Transverse colon (tissue), 4 donors: ENCODE measurements at regions of chr3 and their contacts with region 1.

Region 1: DNA sequence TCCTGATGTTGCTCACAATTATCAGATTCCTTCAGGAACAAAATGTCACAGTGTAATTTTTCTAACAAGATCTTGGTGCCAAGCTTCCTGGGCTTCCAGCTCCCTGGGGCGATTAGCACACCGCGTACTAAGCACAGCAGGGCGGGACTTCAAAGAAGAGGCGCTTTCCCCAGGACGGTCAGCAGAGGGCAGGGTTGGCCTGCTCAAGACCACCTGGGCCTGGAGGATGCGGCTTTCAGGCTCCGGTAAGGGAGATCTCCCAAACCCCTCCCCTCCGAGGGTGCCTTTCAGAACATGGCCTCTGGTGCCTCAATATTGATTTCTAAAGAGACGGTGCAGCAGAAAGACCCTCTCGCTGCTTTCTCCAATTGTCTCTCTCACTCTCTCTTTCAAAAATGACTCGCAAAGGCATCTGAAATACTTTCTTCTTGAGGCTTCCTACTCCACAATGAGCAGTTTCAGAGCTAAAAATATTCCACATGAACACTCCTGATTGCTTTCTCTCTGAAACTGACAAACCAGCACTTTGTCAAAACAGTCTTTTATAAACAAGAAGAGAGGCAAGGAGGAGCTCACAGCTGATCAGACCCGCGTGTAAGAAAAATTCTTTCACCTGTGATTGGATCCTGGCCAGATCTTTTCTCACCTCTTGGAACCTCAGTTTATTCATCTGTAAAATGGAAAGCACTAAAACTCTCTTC is 154.0 kb downstream of the ADAMTS9 start:
- DNase-seq: peak; percentile 84
- H3K4me3 ChIP-seq: no peak overlapping the region
- H3K27ac ChIP-seq: peak overlapping the region in 3 of 4 donors; percentile 16 to 53 (median 39)
- H3K4me1 ChIP-seq: peaks cover 0 to 4% (median 2%) of the 10 kb centered on the region in 4 donors
- H3K27me3 ChIP-seq: no peaks in the 10 kb centered on the region
- CTCF ChIP-seq: peak; percentile 68 to 88 (median 76)
- EP300 ChIP-seq: no peak
- POLR2A ChIP-seq: no peak

Region 2: GRCh38 chr3:64267721-64268604 is 265.8 kb before region 1 on chr3:
- in situ Hi-C with region 1: no loop called
- intact Hi-C with region 1: no loop called
- DNase-seq: peak; percentile 55
- H3K4me3 ChIP-seq: peak overlapping the region; percentile 30 to 60 (median 52)
- H3K27ac ChIP-seq: peak overlapping the region; percentile 87 to 94 (median 92)
- H3K4me1 ChIP-seq: peaks cover 0 to 17% (median 8%) of the 10 kb centered on the region in 4 donors
- H3K27me3 ChIP-seq: peaks cover 18% of the 10 kb centered on the region
- CTCF ChIP-seq: no peak
- EP300 ChIP-seq: no peak
- POLR2A ChIP-seq: peak; percentile 67

Region 3: GRCh38 chr3:64518950-64519349 is 14.8 kb before region 1 on chr3:
- in situ Hi-C with region 1: no loop called
- intact Hi-C with region 1: no loop called
- DNase-seq: no peak
- H3K4me3 ChIP-seq: no peak overlapping the region
- H3K27ac ChIP-seq: no peak overlapping the region
- H3K4me1 ChIP-seq: no peaks in the 10 kb centered on the region
- H3K27me3 ChIP-seq: no peaks in the 10 kb centered on the region
- CTCF ChIP-seq: no peak
- EP300 ChIP-seq: no peak
- POLR2A ChIP-seq: no peak

Region 4: GRCh38 chr3:64685800-64686445 is 152.2 kb after region 1 on chr3:
- in situ Hi-C with region 1: no loop called
- intact Hi-C with region 1: loop called (anchors 10 kb)
- DNase-seq: peak; percentile 89
- H3K4me3 ChIP-seq: peak overlapping the region; percentile 51 to 66 (median 59)
- H3K27ac ChIP-seq: peak overlapping the region; percentile 90 to 96 (median 92)
- H3K4me1 ChIP-seq: peaks cover 0 to 18% (median 9%) of the 10 kb centered on the region in 4 donors
- H3K27me3 ChIP-seq: peaks cover 23% of the 10 kb centered on the region
- CTCF ChIP-seq: peak in 4 of 5 experiments; percentile 7 to 32 (median 13)
- EP300 ChIP-seq: peak; percentile 64
- POLR2A ChIP-seq: peak; percentile 78

Region 5: GRCh38 chr3:65170390-65171042 is 636.7 kb after region 1 on chr3:
- in situ Hi-C with region 1: loop called in 1 of 4 experiments (anchors 25 kb)
- intact Hi-C with region 1: no loop called
- DNase-seq: peak; percentile 76
- H3K4me3 ChIP-seq: no peak overlapping the region
- H3K27ac ChIP-seq: peak overlapping the region; percentile 20 to 65 (median 59)
- H3K4me1 ChIP-seq: peaks cover 0 to 10% (median 4%) of the 10 kb centered on the region in 4 donors
- H3K27me3 ChIP-seq: no peaks in the 10 kb centered on the region
- CTCF ChIP-seq: peak in 2 of 5 experiments; percentile 14 to 32
- EP300 ChIP-seq: peak; percentile 100
- POLR2A ChIP-seq: no peak

Region 6: GRCh38 chr3:65245133-65246063 is 711.6 kb after region 1 on chr3:
- in situ Hi-C with region 1: loop called in 3 of 4 experiments (anchors 25 kb)
- intact Hi-C with region 1: loop called (anchors 5 kb)
- DNase-seq: no peak
- H3K4me3 ChIP-seq: no peak overlapping the region
- H3K27ac ChIP-seq: no peak overlapping the region
- H3K4me1 ChIP-seq: peaks cover 0 to 4% (median 0%) of the 10 kb centered on the region in 4 donors
- H3K27me3 ChIP-seq: no peaks in the 10 kb centered on the region
- CTCF ChIP-seq: peak; percentile 26 to 47 (median 35)
- EP300 ChIP-seq: no peak
- POLR2A ChIP-seq: no peak

Region 7: DNA sequence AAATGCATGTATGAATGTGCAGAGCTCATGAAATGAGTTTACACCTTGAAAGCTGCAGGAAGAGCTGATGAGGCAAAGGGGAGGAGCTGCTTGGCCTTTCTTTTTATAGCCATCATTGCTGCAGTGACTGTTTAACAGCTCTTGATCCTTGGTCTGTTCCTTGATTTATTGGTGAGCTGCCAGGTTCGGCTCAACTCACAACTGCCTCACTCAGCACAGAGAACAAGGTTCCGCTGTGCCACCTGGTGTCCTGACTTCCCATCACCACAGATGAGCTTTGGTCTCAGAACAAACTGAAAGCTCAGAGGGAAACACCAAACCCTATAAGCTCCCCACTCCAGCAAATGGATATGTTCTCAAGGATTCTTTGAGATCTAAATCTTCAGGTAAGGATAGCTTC is 878.8 kb after region 1 on chr3:
- in situ Hi-C with region 1: loop called in 1 of 4 experiments (anchors 25 kb)
- intact Hi-C with region 1: loop called (anchors 5 kb)
- DNase-seq: peak; percentile 87
- H3K4me3 ChIP-seq: no peak overlapping the region
- H3K27ac ChIP-seq: peak overlapping the region; percentile 24 to 69 (median 54)
- H3K4me1 ChIP-seq: peaks cover 5 to 26% (median 13%) of the 10 kb centered on the region in 4 donors
- H3K27me3 ChIP-seq: no peaks in the 10 kb centered on the region
- CTCF ChIP-seq: peak; percentile 29 to 79 (median 46)
- EP300 ChIP-seq: peak; percentile 16
- POLR2A ChIP-seq: no peak

Region 8: GRCh38 chr3:65439641-65440284 is 906.0 kb after region 1 on chr3:
- in situ Hi-C with region 1: loop called in 1 of 4 experiments (anchors 25 kb)
- intact Hi-C with region 1: no loop called
- DNase-seq: peak; percentile 35
- H3K4me3 ChIP-seq: no peak overlapping the region
- H3K27ac ChIP-seq: no peak overlapping the region
- H3K4me1 ChIP-seq: no peaks in the 10 kb centered on the region
- H3K27me3 ChIP-seq: no peaks in the 10 kb centered on the region
- CTCF ChIP-seq: peak; percentile 37 to 50 (median 47)
- EP300 ChIP-seq: no peak
- POLR2A ChIP-seq: no peak

Region 9: GRCh38 chr3:65732051-65732935 is 1198.5 kb after region 1 on chr3:
- in situ Hi-C with region 1: loop called in 3 of 4 experiments (anchors 25 kb)
- intact Hi-C with region 1: no loop called
- DNase-seq: no peak
- H3K4me3 ChIP-seq: no peak overlapping the region
- H3K27ac ChIP-seq: no peak overlapping the region
- H3K4me1 ChIP-seq: peaks cover 0 to 24% (median 11%) of the 10 kb centered on the region in 4 donors
- H3K27me3 ChIP-seq: no peaks in the 10 kb centered on the region
- CTCF ChIP-seq: peak; percentile 40 to 77 (median 68)
- EP300 ChIP-seq: no peak
- POLR2A ChIP-seq: no peak